Activated CD4-positive, alpha-beta T cell treated with anti-CD3 and anti-CD28 coated beads, Interleukin-2, amount 10 ng/mL, durations not matched to agents 24 days and 14 days (primary cell): ENCODE measurements at regions of chrX and their contacts with region 1.

Region 1: DNA sequence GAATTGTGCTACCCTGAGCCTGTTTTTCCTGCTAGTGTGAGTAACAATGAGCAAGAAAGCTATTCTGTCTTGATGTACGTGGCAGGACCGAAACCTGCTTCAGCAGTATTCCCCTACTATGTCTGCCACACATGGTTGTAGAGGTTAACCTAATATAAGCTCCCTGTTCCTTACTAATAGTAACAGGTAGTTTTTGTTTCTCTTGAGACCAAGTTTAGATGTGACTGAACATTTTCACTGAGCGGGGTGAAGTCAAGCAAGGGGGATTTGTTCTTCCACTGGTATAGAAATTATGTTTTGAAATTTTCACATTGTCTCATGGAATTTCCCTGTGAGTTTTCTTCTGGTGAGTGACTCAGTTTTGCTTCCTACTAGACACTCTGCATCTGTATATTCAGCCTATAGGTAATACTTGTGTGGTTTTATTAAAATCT is 37.3 kb downstream of the RRAGB start:
- DNase-seq: no peak
- H3K4me3 Mint-ChIP-seq: no peak overlapping the region
- H3K27ac Mint-ChIP-seq: no peak overlapping the region
- H3K4me1 Mint-ChIP-seq: no peaks in the 10 kb centered on the region
- H3K27me3 Mint-ChIP-seq: no peaks in the 10 kb centered on the region

Region 2: DNA sequence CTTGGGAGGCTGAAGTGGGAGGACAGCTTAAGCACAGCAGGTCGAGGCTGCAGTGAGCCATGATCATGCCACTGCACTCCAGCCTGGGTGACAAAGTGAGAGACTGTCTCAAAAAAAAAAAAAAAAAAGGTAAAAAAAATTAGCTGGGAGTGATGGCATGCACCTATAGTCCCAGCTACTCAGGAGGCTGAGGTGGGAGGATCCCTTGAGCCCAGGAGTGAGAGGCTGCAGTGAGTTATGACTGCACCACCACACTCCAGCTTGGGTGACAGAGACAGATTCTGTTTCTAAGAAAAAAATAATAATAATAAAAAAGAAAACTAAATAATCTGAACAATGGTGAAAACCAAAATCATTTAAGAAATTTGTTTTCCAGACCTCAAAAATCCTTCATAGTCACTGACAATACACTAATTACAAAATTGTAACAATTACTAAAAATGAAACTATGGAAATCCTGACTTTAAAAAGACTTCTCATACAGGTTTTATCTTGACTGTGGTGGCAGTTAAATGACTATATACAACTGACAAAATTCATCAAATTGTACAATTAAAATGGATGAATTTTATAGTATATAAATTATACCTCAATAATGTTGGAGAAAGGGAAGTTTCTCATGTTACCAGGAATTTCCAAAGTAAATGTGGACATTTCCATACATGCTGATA is 1741.9 kb before region 1 on chrX:
- intact Hi-C with region 1: loop called (anchors 10 kb)
- DNase-seq: no peak
- H3K4me3 Mint-ChIP-seq: no peak overlapping the region
- H3K27ac Mint-ChIP-seq: no peak overlapping the region
- H3K4me1 Mint-ChIP-seq: peaks cover 4% of the 10 kb centered on the region
- H3K27me3 Mint-ChIP-seq: no peaks in the 10 kb centered on the region

Region 3: DNA sequence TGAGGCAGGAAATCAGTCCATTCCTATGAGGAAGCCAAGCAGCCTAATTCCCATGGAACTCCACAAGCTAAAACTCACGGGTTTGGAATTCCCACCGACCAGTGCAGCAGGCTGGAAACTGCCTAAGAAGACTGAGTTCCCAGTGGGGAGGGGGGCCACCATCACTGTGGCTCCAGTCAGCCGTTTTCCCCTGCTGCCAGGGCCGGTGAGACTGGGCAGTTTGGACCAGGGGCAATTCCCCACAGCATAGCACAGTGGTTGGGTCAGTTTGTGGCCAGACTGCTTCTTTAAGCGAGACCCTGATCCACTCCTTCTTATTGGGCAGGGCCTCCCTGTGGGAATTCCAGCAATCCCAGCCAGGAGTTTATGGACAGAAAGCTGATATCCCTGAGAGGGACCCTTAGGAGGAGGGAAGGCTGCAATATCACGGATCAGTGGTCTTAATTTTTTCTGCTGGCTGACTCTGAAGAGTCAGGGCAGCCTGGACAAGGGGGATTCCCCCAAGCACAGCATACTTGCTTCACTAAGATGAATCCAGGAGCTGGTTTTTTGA is 514.0 kb before region 1 on chrX:
- intact Hi-C with region 1: no loop called
- DNase-seq: no peak
- H3K4me3 Mint-ChIP-seq: no peak overlapping the region
- H3K27ac Mint-ChIP-seq: no peak overlapping the region
- H3K4me1 Mint-ChIP-seq: no peaks in the 10 kb centered on the region
- H3K27me3 Mint-ChIP-seq: no peaks in the 10 kb centered on the region

Region 4: GRCh38 chrX:56783450-56783831 is 1028.6 kb after region 1 on chrX:
- intact Hi-C with region 1: no loop called
- DNase-seq: no peak
- H3K4me3 Mint-ChIP-seq: no peak overlapping the region
- H3K27ac Mint-ChIP-seq: no peak overlapping the region
- H3K4me1 Mint-ChIP-seq: peaks cover 28% of the 10 kb centered on the region
- H3K27me3 Mint-ChIP-seq: no peaks in the 10 kb centered on the region